Heart right ventricle (tissue), 16 donors: ENCODE measurements at regions of chr12 and their contacts with region 1.

Region 1: GRCh38 chr12:21925296-21925913 is 15.8 kb downstream of the ABCC9 start:
- DNase-seq: no peak
- ATAC-seq: no peak
- H3K4me3 ChIP-seq: no peak overlapping the region
- H3K27ac ChIP-seq: no peak overlapping the region
- H3K4me1 ChIP-seq: no peaks in the 10 kb centered on the region
- H3K27me3 ChIP-seq: no peaks in the 10 kb centered on the region
- CTCF ChIP-seq: no peak

Region 2: GRCh38 chr12:21831791-21832344 is 93.5 kb before region 1 on chr12:
- intact Hi-C with region 1: loop called in 2 of 10 experiments (anchors 10 kb)
- DNase-seq: peak in 1 of 2 donors; percentile 36
- ATAC-seq: peak; percentile 60 to 87 (median 74)
- H3K4me3 ChIP-seq: no peak overlapping the region
- H3K27ac ChIP-seq: peak overlapping the region in 9 of 10 donors; percentile 23 to 77 (median 59)
- H3K4me1 ChIP-seq: peaks cover 0 to 30% (median 7%) of the 10 kb centered on the region in 9 donors
- H3K27me3 ChIP-seq: no peaks in the 10 kb centered on the region
- CTCF ChIP-seq: no peak

Region 3: GRCh38 chr12:21891751-21892217 is 33.6 kb before region 1 on chr12:
- intact Hi-C with region 1: loop called in 1 of 10 experiments (anchors 5 kb)
- DNase-seq: peak; percentile 27 to 40
- ATAC-seq: peak; percentile 72 to 95 (median 84)
- H3K4me3 ChIP-seq: no peak overlapping the region
- H3K27ac ChIP-seq: peak overlapping the region; percentile 20 to 80 (median 66)
- H3K4me1 ChIP-seq: peaks cover 0 to 54% (median 17%) of the 10 kb centered on the region in 9 donors
- H3K27me3 ChIP-seq: no peaks in the 10 kb centered on the region
- CTCF ChIP-seq: no peak